CD4-positive, alpha-beta T cell (primary cell): ENCODE measurements at regions of chr2 and their contacts with region 1.

Region 1: DNA sequence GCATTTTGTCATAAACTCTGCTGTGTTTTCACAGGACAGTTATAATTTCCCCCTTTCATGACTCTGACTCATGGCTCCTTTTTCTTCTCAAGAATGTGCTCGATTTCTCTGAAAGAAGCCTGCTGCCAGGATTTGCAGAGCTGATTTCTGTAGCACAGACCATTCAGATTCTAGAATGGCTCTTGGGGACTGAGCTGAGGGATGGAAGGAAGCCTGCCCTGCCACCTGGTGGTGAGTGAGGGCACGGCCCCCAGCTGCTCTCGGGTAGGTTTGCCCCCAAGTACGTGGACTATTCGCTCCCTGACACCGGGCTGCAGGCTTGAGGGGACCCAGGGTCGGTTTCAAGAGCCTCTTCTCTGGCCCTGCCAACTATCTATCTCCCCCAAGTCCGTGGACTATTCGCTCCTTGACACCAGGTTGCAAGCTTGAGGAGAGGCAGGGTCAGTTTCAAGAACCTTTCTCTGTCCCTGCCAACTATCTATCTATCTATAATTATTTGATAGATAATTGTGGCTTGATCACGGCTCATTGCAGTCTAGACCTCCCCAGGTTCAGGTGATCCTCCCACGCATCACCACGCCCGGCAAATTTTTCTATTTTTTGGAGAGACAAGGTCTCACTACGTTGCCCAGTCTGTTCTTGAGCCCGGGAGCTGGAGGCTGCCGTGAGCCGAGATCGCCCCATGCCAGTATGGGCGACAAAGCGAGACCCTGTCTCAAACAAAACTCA is 1.4 kb upstream of the SMYD5 start:
- DNase-seq: peak; percentile 56 to 86 (median 64)
- ATAC-seq: peak; percentile 59
- H3K4me3 ChIP-seq: no peak overlapping the region
- H3K4me3 Mint-ChIP-seq: peak overlapping the region; percentile 84
- H3K27ac ChIP-seq: no peak overlapping the region
- H3K27ac Mint-ChIP-seq: peak overlapping the region; percentile 81
- H3K4me1 ChIP-seq: peaks cover 32% of the 10 kb centered on the region
- H3K4me1 Mint-ChIP-seq: peaks cover 37% of the 10 kb centered on the region
- H3K27me3 ChIP-seq: no peaks in the 10 kb centered on the region
- H3K27me3 Mint-ChIP-seq: peaks cover 23% of the 10 kb centered on the region
- CTCF ChIP-seq: peak; percentile 85

Region 2: GRCh38 chr2:73071360-73072133 is 141.1 kb before region 1 on chr2 and contains the start of gene SFXN5:
- CTCF ChIA-PET with region 1: interaction called, 6 read pairs
- POLR2A ChIA-PET with region 1: no interaction called
- intact Hi-C with region 1: loop called in 1 of 2 experiments (anchors 2 kb)
- DNase-seq: peak; percentile 87 to 96 (median 92)
- ATAC-seq: peak; percentile 84
- H3K4me3 ChIP-seq: peak within 1 kb of the TSS; percentile 84
- H3K4me3 Mint-ChIP-seq: peak within 1 kb of the TSS; percentile 99
- H3K27ac ChIP-seq: peak within 1 kb of the TSS; percentile 81 to 86
- H3K27ac Mint-ChIP-seq: peak within 1 kb of the TSS; percentile 91
- H3K4me1 ChIP-seq: peaks cover 21% of the 10 kb centered on the region
- H3K4me1 Mint-ChIP-seq: peaks cover 31% of the 10 kb centered on the region
- H3K27me3 ChIP-seq: no peaks in the 10 kb centered on the region
- H3K27me3 Mint-ChIP-seq: no peaks in the 10 kb centered on the region
- CTCF ChIP-seq: no peak
- total RNA-seq, gene SFXN5: 5.1 to 5.4 TPM

Region 3: DNA sequence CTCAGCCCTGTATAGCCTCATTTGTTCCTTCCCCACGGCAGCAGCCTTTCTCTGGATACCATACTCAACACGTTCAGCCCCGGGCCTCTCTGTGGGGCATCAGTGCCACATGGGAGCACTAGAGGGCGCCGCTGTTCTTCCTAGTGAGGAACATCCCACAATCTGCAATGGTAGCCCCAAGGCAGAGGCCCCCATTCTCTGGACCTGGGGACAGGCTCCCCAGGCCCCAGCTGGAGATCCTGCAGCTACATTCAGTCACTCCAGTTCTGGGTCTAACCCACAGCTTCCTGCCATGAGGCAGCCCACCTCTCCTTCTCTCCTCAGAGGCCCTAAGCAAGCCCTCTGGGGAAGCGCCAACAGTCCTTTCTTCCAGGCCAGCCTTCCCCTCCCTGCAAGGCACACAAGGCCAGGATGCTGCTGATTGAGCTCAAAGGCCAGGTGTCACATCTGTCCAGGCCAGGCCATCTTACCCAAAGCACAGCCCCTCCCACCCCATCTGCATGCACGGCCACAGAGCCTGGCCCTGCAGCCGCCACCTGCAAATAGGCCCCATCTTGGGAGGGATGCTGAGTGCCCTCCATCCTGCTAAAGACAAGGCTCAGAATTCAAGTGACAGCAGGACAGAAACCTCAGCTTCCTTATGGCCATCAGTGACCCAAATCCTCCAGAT is 126.8 kb before region 1 on chr2:
- CTCF ChIA-PET with region 1: interaction called, 11 read pairs
- POLR2A ChIA-PET with region 1: no interaction called
- intact Hi-C with region 1: loop called (anchors 1 kb)
- DNase-seq: peak; percentile 73 to 89 (median 78)
- ATAC-seq: peak; percentile 96
- H3K4me3 ChIP-seq: no peak overlapping the region
- H3K4me3 Mint-ChIP-seq: no peak overlapping the region
- H3K27ac ChIP-seq: no peak overlapping the region
- H3K27ac Mint-ChIP-seq: no peak overlapping the region
- H3K4me1 ChIP-seq: peaks cover 3% of the 10 kb centered on the region
- H3K4me1 Mint-ChIP-seq: no peaks in the 10 kb centered on the region
- H3K27me3 ChIP-seq: no peaks in the 10 kb centered on the region
- H3K27me3 Mint-ChIP-seq: no peaks in the 10 kb centered on the region
- CTCF ChIP-seq: peak; percentile 89

Region 4: DNA sequence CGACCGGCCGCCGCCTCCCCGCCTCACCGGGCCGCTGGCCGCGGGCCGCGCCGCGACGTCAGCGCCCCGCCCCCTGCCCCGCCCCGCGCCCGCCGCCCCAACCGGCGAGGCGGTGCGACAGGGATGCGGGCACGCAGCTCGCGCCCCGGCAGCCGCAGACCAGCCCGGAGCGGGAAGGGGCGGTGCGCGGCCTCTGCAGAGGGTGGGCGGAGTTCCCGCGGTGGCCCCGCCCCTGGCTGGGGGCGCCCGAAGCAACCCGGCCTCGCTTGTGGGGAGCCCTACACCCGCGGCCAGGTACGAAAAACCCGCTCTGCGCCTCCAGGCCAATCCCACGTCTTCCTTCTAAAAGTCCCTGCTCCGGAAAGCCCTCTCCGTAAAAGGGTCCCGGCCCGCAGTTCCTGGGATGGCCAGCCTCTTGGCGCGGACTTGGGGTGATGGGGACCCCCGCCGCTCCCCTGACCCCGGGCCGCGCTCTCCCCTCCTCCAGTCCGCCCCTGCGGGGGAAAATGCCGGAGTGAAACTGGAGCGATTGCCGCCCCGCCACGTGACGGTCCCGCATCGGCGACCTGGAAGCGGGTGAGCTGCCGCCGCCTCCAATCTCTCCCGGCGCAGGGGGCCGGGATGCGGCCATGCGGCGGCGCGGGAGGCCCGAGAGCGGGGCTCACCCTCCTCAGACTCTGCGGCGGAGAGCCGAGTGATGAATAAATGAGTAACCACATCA is 99.5 kb before region 1 on chr2 and contains the start of gene RAB11FIP5:
- CTCF ChIA-PET with region 1: interaction called, 5 read pairs
- POLR2A ChIA-PET with region 1: no interaction called
- intact Hi-C with region 1: loop called in 1 of 2 experiments (anchors 5 kb)
- DNase-seq: peak; percentile 58 to 93 (median 75)
- ATAC-seq: peak; percentile 90
- H3K4me3 ChIP-seq: peak within 1 kb of the TSS; percentile 84
- H3K4me3 Mint-ChIP-seq: peak within 1 kb of the TSS; percentile 86
- H3K27ac ChIP-seq: peak within 1 kb of the TSS in 1 of 2 donors; percentile 21
- H3K27ac Mint-ChIP-seq: peak within 1 kb of the TSS; percentile 65
- H3K4me1 ChIP-seq: peaks cover 35% of the 10 kb centered on the region
- H3K4me1 Mint-ChIP-seq: peaks cover 27% of the 10 kb centered on the region
- H3K27me3 ChIP-seq: no peaks in the 10 kb centered on the region
- H3K27me3 Mint-ChIP-seq: no peaks in the 10 kb centered on the region
- CTCF ChIP-seq: no peak
- total RNA-seq, gene RAB11FIP5: 12.6 to 13.8 TPM

Region 5: GRCh38 chr2:73293534-73294171 is 81.0 kb after region 1 on chr2 and contains the start of gene EGR4:
- CTCF ChIA-PET with region 1: interaction called, 11 read pairs
- POLR2A ChIA-PET with region 1: interaction called, 4 read pairs
- intact Hi-C with region 1: loop called in 1 of 2 experiments (anchors 5 kb)
- DNase-seq: peak; percentile 78 to 96 (median 84)
- ATAC-seq: peak; percentile 94
- H3K4me3 ChIP-seq: peak within 1 kb of the TSS; percentile 48
- H3K4me3 Mint-ChIP-seq: peak within 1 kb of the TSS; percentile 82
- H3K27ac ChIP-seq: no peak within 1 kb of the TSS
- H3K27ac Mint-ChIP-seq: no peak within 1 kb of the TSS
- H3K4me1 ChIP-seq: peaks cover 30% of the 10 kb centered on the region
- H3K4me1 Mint-ChIP-seq: peaks cover 21% of the 10 kb centered on the region
- H3K27me3 ChIP-seq: peaks cover 61 to 79% of the 10 kb centered on the region in 2 experiments
- H3K27me3 Mint-ChIP-seq: peaks cover 91% of the 10 kb centered on the region
- CTCF ChIP-seq: no peak
- total RNA-seq, gene EGR4: 0.14 to 0.17 TPM

Region 6: DNA sequence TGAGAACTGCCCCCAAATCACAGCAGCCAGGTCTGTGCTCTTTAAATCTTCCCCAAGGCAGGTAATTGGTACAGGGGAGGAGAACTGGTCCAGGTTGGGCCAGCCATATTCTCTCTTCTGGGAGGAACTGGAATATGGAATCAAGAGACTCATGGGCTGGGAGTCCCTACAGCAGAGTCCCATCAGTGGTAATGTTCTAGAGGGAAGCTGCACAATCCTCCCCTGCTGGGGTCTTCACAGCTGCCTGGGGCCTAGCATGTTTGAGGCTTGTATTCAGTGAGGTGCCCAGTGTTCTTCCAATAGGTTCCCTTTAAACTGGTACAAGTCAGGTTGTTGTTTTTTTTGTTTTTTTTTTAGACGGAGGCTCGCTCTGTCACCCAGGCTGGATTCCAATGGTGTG is 101.8 kb after region 1 on chr2:
- CTCF ChIA-PET with region 1: no interaction called
- POLR2A ChIA-PET with region 1: no interaction called
- intact Hi-C with region 1: no loop called
- DNase-seq: no peak
- ATAC-seq: no peak
- H3K4me3 ChIP-seq: no peak overlapping the region
- H3K4me3 Mint-ChIP-seq: no peak overlapping the region
- H3K27ac ChIP-seq: no peak overlapping the region
- H3K27ac Mint-ChIP-seq: no peak overlapping the region
- H3K4me1 ChIP-seq: no peaks in the 10 kb centered on the region
- H3K4me1 Mint-ChIP-seq: no peaks in the 10 kb centered on the region
- H3K27me3 ChIP-seq: peaks cover 0 to 3% of the 10 kb centered on the region in 2 experiments
- H3K27me3 Mint-ChIP-seq: peaks cover 39% of the 10 kb centered on the region
- CTCF ChIP-seq: no peak

Region 7: DNA sequence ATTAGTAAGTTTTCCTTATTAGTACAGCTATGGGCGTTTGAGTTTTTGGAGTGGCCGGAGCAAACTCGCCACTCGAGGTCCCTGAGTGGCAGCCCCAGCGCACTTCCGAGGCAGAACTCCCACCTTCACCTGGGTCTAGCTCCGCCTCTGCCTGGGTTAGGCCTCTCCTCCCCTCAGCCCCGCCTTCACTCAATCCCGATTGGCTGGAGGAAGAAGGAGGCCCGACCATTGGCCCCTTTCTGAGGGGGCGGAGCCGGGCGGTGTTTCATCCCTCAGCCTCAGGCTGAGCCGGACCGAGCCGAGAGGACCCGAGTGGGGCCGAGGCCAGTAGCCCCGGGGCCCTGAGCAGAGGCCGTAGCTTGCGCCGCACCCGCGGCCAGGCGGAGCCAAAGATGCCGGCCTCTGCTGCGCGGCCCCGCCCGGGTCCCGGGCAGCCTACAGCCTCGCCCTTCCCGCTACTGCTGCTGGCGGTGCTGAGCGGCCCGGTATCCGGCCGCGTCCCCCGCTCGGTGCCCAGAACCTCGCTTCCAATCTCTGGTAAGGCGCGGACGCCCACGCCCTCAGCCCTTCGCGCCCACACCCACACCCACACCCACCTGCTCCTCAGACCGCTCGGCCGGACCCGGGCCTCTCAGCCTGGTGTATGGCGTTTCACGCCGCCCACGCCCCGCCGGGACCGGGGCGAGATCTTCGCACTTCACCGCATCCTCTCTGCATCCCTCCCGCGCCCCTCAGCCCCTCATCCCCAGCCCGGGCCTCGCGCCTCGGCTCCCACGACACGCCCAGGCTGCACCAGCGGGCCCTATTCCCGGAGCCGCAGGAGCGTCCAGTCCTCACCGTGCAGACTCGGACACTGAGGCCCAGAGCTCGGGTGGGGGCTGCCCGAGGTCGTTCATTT is 1441.6 kb after region 1 on chr2 and contains the start of gene SEMA4F:
- CTCF ChIA-PET with region 1: no interaction called
- POLR2A ChIA-PET with region 1: no interaction called
- intact Hi-C with region 1: loop called in 1 of 2 experiments (anchors 10 kb)
- DNase-seq: peak; percentile 83 to 96 (median 92)
- ATAC-seq: peak; percentile 99
- H3K4me3 ChIP-seq: peak within 1 kb of the TSS; percentile 80
- H3K4me3 Mint-ChIP-seq: peak within 1 kb of the TSS; percentile 88
- H3K27ac ChIP-seq: no peak within 1 kb of the TSS
- H3K27ac Mint-ChIP-seq: peak within 1 kb of the TSS; percentile 80
- H3K4me1 ChIP-seq: peaks cover 18% of the 10 kb centered on the region
- H3K4me1 Mint-ChIP-seq: peaks cover 26% of the 10 kb centered on the region
- H3K27me3 ChIP-seq: peaks cover 2 to 5% of the 10 kb centered on the region in 2 experiments
- H3K27me3 Mint-ChIP-seq: peaks cover 14% of the 10 kb centered on the region
- CTCF ChIP-seq: no peak
- total RNA-seq, gene SEMA4F: 6.8 to 7.3 TPM